ENCODE measurements at regions of chr19 and their contacts with region 1.

Region 1: DNA sequence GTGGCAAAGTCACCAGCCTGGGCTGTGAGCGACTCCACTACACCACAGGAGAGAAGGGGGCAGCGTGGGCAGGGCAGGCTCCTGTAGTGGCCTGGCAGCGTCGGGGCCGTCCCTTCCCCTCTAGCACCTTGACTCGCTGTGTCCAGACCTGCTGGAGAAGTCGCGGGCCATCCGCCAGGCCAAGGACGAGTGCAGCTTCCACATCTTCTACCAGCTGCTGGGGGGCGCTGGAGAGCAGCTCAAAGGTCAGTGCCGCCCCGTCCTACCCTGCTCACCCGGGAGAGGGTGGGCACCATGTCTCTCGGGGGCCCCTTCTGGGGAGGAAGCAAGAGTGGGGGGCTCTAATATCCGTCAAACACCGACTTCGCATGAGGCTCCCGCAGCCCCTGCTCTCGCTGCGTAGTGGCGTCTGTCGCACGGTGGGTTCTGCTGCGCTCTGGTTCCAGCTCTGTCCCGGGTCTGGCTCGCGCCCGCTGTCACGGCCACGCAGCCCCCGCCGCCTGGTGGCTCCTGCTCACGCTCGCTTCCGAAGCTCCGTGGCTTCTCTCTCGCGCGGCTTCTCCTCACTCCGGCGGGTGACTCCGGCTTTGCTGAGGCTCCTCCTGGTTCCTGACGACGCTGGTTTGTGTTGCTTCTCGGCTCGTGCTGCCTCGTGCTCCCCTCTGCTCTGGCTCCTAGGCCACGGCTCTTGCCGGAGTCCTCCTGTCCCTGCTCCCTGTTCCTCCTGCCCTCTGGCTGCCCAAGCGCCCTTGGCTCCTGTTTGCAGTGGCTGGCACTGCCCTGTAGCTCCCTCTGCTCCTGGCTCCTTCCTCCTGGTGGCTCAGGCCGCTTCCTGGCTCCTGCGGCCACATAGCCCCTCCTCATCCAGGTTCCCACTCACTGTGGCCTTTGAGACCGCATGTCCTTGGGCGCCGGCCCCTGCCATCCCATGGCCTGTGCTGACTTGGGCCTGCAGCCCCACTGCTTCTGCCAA is 27.2 kb downstream of the MYH14 start:
- DNase-seq: peak; percentile 44 to 86
- H3K4me3 ChIP-seq: no peak overlapping the region
- H3K27ac ChIP-seq: no peak overlapping the region
- H3K4me1 ChIP-seq: peaks cover 0 to 12% (median 2%) of the 10 kb centered on the region in 4 experiments; a peak in 3 of 7 replicates
- H3K27me3 ChIP-seq: no peaks in the 10 kb centered on the region
- CTCF ChIP-seq: peak; percentile 64 to 89 (median 83)
- EP300 ChIP-seq: no peak
- POLR2A ChIP-seq: no peak
- RAD21 ChIP-seq: peak in 1 of 2 experiments; percentile 45; a peak in 2 of 4 replicates

Region 2: DNA sequence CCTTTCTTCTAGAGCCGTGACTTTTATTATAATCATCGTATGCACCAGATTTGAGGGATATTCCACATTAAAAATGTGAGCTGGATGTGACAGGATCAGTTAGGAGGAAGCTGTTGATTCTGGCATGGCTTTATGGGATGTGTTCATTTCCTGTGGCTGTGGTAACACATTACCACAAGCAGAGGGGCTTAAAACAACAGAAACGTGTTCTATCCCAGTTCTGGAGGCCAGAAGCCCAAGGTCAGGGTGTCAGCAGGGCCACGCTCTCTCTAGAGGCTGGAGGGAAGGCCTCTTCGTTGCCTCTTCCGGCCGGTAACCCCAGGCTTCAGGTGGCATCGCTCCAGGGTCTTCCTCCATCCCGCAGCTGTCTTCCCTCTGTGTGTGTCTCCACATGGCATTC is 398.1 kb before region 1 on chr19:
- CTCF ChIA-PET with region 1: no interaction called
- POLR2A ChIA-PET with region 1: no interaction called
- DNase-seq: no peak
- H3K4me3 ChIP-seq: no peak overlapping the region
- H3K27ac ChIP-seq: no peak overlapping the region
- H3K4me1 ChIP-seq: no peaks in the 10 kb centered on the region
- H3K27me3 ChIP-seq: no peaks in the 10 kb centered on the region
- CTCF ChIP-seq: no peak
- EP300 ChIP-seq: no peak
- POLR2A ChIP-seq: no peak
- RAD21 ChIP-seq: no peak

Region 3: DNA sequence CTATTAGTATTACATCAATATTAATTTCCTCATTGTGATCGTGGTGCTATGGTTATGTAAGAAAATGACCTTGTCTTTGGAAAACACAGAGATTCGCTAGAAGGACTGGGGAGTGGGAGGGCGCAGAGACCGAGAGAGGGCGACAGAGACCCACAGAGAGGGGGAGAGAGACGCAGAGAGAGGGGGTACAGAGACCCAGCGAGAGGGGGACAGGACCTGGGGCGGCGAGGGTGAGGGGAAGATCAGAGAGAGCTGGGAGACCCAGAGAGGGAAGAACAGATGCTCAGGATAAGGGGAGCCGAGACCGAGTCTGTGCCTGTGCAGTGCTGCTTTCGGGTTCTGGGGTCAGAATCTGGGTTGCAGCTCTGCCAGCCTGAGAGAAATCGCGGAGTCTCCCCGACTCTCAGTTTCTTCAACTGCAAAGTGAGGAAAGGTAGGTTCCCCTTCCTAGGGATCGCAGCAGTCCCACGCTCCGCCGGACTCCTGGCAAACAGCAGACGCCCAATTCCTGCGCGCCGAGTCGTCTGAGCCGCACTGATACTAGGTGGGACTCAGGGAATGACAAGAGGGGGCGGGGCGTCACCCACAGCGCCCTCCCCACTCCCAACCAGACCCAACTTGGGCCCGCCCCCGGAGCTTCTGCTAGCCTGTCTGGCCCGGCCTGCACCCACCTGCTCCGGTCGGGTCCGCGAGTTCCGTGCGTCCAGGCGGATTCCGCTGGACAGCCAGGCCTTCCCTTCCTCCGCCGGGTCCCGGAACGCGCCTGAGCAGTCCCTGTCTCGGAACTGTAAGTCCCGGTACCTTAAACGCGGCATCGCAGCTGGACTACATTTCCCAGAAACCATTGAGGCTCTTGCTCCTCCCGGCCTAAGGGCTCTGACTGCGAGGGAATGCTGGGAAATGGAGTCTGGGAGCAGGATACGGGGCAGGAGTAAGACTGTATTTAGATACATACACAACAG is 82.9 kb before region 1 on chr19:
- CTCF ChIA-PET with region 1: interaction called, 14 read pairs
- POLR2A ChIA-PET with region 1: no interaction called
- DNase-seq: peak in 1 of 2 experiments; percentile 86
- H3K4me3 ChIP-seq: peak overlapping the region; percentile 73 to 88 (median 77)
- H3K27ac ChIP-seq: no peak overlapping the region
- H3K4me1 ChIP-seq: no peaks in the 10 kb centered on the region
- H3K27me3 ChIP-seq: 0 out of 7 replicates have a peak, but pooled peaks cover 0 to 2% (median under 1%) of the 10 kb centered on the region in 4 experiments
- CTCF ChIP-seq: peak; percentile 65 to 73 (median 67)
- EP300 ChIP-seq: no peak
- POLR2A ChIP-seq: no peak
- RAD21 ChIP-seq: peak; percentile 77 to 83

Region 4: DNA sequence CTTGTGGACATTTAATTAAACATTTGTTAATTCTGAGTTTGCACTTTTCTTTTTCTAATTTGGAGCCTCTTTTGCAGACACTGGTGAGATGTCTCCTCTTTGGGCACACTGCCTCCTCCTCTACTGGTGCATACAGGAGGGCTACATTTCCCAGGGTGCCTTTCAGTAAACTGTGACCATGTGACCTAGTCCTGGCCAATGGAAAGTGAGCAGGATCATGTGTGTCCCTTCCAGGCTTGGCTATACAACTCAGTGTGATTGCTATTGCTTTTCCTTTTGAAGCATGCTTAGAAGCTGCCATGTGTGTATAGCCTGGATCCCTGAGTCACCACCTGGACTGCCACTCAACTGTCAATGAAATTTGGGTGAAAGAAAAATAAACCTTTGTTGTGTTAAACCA is 72.1 kb before region 1 on chr19:
- CTCF ChIA-PET with region 1: no interaction called
- POLR2A ChIA-PET with region 1: no interaction called
- DNase-seq: no peak
- H3K4me3 ChIP-seq: no peak overlapping the region
- H3K27ac ChIP-seq: no peak overlapping the region
- H3K4me1 ChIP-seq: peaks cover 0 to 3% (median 0%) of the 10 kb centered on the region in 4 experiments; a peak in 1 of 7 replicates
- H3K27me3 ChIP-seq: no peaks in the 10 kb centered on the region
- CTCF ChIP-seq: no peak
- EP300 ChIP-seq: no peak
- POLR2A ChIP-seq: no peak
- RAD21 ChIP-seq: no peak

Region 5: DNA sequence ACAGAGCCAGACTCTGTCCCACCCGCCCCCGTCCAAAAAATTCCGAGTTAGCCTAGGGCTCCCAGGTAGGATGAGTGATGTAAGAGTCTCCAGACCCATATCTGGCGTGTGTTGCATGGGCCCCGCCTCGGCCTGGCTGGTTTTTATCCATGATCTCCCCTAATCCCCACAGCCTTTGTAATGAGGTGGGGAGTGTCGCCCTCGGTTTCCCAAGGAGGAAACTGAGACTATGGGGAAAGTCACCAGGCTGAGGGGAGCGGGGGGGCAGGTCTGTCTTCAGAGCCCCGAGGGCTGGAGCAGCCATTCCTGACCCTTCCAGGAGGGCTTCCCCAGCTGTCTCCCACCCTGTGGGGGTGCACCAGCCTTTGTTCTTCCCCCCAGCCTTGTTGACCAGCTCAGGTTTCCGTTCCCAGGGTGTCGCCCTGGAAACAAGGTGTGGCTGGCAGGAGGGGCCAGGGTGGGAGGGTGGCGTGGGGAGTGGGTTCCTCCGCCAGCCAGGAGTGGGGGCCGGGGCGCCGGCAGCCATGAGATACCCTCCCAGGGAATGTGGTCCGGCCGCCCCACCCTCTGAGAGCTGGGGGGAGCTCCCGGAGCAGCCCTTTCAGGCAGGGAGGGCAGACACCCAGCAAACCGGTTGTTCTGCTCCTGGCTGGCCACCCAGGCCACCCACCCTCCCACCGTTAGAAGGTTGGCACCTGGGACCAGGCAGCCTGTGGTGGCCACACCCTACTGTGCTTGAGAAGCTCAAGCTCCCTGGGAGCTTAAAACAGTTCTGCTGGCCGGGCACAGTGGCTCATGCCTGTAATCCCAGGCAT is 15.7 kb before region 1 on chr19:
- CTCF ChIA-PET with region 1: interaction called, 20 read pairs
- POLR2A ChIA-PET with region 1: no interaction called
- DNase-seq: peak in 1 of 2 experiments; percentile 53
- H3K4me3 ChIP-seq: no peak overlapping the region
- H3K27ac ChIP-seq: no peak overlapping the region; the same call in 1 of the 2 replicates
- H3K4me1 ChIP-seq: peaks cover 0 to 12% (median 8%) of the 10 kb centered on the region in 4 experiments; a peak in 5 of 7 replicates
- H3K27me3 ChIP-seq: no peaks in the 10 kb centered on the region
- CTCF ChIP-seq: no peak
- EP300 ChIP-seq: peak in 1 of 2 experiments; percentile 15; a peak in 1 of 3 replicates
- POLR2A ChIP-seq: no peak
- RAD21 ChIP-seq: no peak

Region 6: GRCh38 chr19:50252111-50252886 is 21.6 kb after region 1 on chr19:
- CTCF ChIA-PET with region 1: interaction called, 397 read pairs
- POLR2A ChIA-PET with region 1: no interaction called
- DNase-seq: peak in 1 of 2 experiments; percentile 92
- H3K4me3 ChIP-seq: no peak overlapping the region
- H3K27ac ChIP-seq: no peak overlapping the region
- H3K4me1 ChIP-seq: no peaks in the 10 kb centered on the region
- H3K27me3 ChIP-seq: no peaks in the 10 kb centered on the region
- CTCF ChIP-seq: peak; percentile 63 to 93 (median 81)
- EP300 ChIP-seq: no peak
- POLR2A ChIP-seq: no peak
- RAD21 ChIP-seq: peak; percentile 47 to 60

Region 7: GRCh38 chr19:50449236-50449899 is 218.7 kb after region 1 on chr19:
- CTCF ChIA-PET with region 1: no interaction called
- POLR2A ChIA-PET with region 1: no interaction called
- DNase-seq: no peak
- H3K4me3 ChIP-seq: no peak overlapping the region
- H3K27ac ChIP-seq: no peak overlapping the region
- H3K4me1 ChIP-seq: peaks cover 0 to 7% (median 0%) of the 10 kb centered on the region in 4 experiments; a peak in 1 of 7 replicates
- H3K27me3 ChIP-seq: no peaks in the 10 kb centered on the region; a peak in 1 of 7 replicates
- CTCF ChIP-seq: no peak
- EP300 ChIP-seq: no peak
- POLR2A ChIP-seq: no peak
- RAD21 ChIP-seq: no peak